Activated B cell treated with CpG ODN at 0.5 μM for 24 hours (primary cell): ENCODE measurements at regions of chr3 and their contacts with region 1.

Region 1: DNA sequence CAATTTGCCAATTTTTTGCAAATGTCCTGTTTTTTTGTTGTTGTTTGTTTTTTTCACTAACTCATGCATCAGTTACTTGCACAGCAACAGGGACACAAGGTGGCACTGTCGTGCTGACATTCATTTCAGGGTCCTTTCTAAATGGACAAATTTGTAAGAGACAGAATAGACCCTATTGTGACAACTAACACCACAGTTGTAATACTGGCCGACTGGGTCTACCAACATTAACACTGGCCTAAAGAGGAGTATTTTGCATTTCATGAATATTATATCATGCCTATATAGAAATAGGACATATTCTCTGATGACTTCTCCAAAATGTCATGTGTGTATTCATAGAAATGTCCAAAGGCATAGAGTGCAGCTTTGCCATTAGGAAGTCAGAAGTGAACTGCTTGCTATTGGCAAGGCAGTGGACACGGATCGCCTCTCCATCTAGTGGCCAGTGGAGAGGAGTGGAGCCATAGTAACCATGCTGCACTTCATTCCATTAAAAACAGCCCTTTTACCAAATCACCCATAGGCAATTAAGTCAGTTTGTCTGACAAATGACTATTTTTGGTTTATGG is 54.8 kb downstream of the ZBTB20 start:
- DNase-seq: no peak
- ATAC-seq: peak; percentile 45
- H3K4me3 Mint-ChIP-seq: no peak overlapping the region
- H3K27ac Mint-ChIP-seq: no peak overlapping the region
- H3K4me1 Mint-ChIP-seq: peaks cover 5% of the 10 kb centered on the region
- H3K27me3 Mint-ChIP-seq: no peaks in the 10 kb centered on the region
- CTCF ChIP-seq: no peak

Region 2: DNA sequence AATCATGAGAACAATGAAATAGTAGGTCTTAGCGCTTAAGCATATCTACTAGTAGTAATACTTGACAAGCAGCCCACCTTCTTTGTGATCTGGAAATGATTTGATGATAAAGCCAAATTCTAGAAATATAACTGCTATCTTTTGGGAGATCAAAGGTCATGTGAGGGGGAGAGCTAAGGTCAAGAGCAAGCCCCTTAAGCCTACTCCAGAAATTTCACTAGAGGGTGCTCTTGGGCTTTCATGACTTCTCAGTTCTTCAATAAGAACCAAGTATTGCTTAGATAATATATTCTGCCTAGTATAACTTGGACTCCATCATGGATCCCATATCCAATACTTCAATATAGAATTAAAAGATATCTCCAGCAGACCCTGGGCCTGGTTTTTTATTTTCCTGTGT is 264.8 kb before region 1 on chr3:
- CTCF ChIA-PET with region 1: interaction called, 4 read pairs
- POLR2A ChIA-PET with region 1: no interaction called
- intact Hi-C with region 1: loop called (anchors 2 kb)
- DNase-seq: no peak
- ATAC-seq: peak; percentile 75
- H3K4me3 Mint-ChIP-seq: no peak overlapping the region
- H3K27ac Mint-ChIP-seq: no peak overlapping the region
- H3K4me1 Mint-ChIP-seq: no peaks in the 10 kb centered on the region
- H3K27me3 Mint-ChIP-seq: no peaks in the 10 kb centered on the region
- CTCF ChIP-seq: no peak

Region 3: DNA sequence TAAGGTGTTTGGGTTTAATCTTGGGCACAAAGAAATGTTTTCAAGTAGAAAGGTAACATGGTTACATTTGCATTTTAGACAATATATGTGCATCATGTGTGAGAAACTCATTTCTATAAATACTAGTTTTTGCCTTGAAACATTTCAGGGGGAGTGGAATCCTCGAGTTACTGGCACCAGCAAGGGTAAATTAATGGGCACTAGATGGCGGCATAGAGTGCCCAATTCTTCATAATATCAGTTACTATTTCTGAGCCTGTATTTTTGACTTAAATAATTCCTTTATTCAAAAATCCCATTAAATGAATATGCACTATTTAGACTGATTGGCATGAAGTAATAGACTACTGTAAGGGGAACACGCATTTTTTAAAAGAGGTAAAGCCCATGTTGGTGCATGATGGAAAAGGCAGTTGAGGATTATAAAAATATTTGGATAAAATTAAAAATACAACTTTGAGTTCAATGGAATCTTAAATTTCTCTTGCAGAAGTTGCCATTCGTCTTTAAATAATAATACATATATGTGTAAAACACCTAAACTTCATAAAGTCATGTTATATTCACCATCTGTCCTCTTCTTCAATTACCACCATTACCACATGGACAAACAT is 51.5 kb before region 1 on chr3:
- CTCF ChIA-PET with region 1: interaction called, 11 read pairs
- POLR2A ChIA-PET with region 1: no interaction called
- intact Hi-C with region 1: no loop called
- DNase-seq: no peak
- ATAC-seq: no peak
- H3K4me3 Mint-ChIP-seq: no peak overlapping the region
- H3K27ac Mint-ChIP-seq: no peak overlapping the region
- H3K4me1 Mint-ChIP-seq: no peaks in the 10 kb centered on the region
- H3K27me3 Mint-ChIP-seq: no peaks in the 10 kb centered on the region
- CTCF ChIP-seq: peak; percentile 24

Region 4: GRCh38 chr3:115169808-115170207 is 77.5 kb after region 1 on chr3:
- CTCF ChIA-PET with region 1: interaction called, 6 read pairs
- POLR2A ChIA-PET with region 1: no interaction called
- intact Hi-C with region 1: loop called (anchors 1 kb)
- DNase-seq: no peak
- ATAC-seq: no peak
- H3K4me3 Mint-ChIP-seq: no peak overlapping the region
- H3K27ac Mint-ChIP-seq: no peak overlapping the region
- H3K4me1 Mint-ChIP-seq: peaks cover 7% of the 10 kb centered on the region
- H3K27me3 Mint-ChIP-seq: no peaks in the 10 kb centered on the region
- CTCF ChIP-seq: no peak

Region 5: GRCh38 chr3:115217678-115218451 is 125.6 kb after region 1 on chr3:
- CTCF ChIA-PET with region 1: no interaction called
- POLR2A ChIA-PET with region 1: no interaction called
- intact Hi-C with region 1: loop called (anchors 5 kb)
- DNase-seq: no peak
- ATAC-seq: peak; percentile 50
- H3K4me3 Mint-ChIP-seq: no peak overlapping the region
- H3K27ac Mint-ChIP-seq: no peak overlapping the region
- H3K4me1 Mint-ChIP-seq: peaks cover 3% of the 10 kb centered on the region
- H3K27me3 Mint-ChIP-seq: peaks cover 18% of the 10 kb centered on the region
- CTCF ChIP-seq: no peak

Region 6: GRCh38 chr3:115814778-115815380 is 722.6 kb after region 1 on chr3:
- CTCF ChIA-PET with region 1: interaction called, 5 read pairs
- POLR2A ChIA-PET with region 1: no interaction called
- intact Hi-C with region 1: loop called (anchors 1 kb)
- DNase-seq: peak; percentile 44
- ATAC-seq: peak; percentile 70
- H3K4me3 Mint-ChIP-seq: no peak overlapping the region
- H3K27ac Mint-ChIP-seq: no peak overlapping the region
- H3K4me1 Mint-ChIP-seq: no peaks in the 10 kb centered on the region
- H3K27me3 Mint-ChIP-seq: peaks cover 5% of the 10 kb centered on the region
- CTCF ChIP-seq: no peak